ENCODE measurements at regions of chr5 and their contacts with region 1.

Region 1: DNA sequence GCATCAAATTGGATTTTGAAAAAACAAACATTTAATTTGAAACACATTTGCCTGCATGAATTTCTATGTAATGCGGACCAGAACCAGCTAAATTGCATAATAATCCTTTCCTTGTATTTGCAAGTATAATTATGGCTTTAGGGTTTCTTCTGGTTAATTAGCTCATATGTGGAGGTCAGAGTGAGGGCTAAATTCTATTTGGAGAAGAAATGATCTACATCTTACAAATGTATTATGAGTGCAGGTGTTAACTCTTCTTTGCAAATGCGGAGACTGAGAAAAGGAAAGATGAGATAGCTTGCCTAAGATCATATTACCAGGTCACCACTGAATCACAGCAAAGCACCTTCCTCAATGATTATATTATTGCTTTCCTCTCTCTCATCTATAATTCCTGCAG is 194.7 kb downstream of the CDH9 start:
- DNase-seq: no peak
- H3K4me3 ChIP-seq: no peak overlapping the region
- H3K27ac ChIP-seq: no peak overlapping the region
- H3K4me1 ChIP-seq: no peaks in the 10 kb centered on the region
- H3K27me3 ChIP-seq: no peaks in the 10 kb centered on the region
- CTCF ChIP-seq: no peak
- EP300 ChIP-seq: no peak
- POLR2A ChIP-seq: no peak

Region 2: GRCh38 chr5:26986985-26987384 is 143.3 kb after region 1 on chr5:
- in situ Hi-C with region 1: no loop called
- intact Hi-C with region 1: no loop called
- DNase-seq: no peak
- H3K4me3 ChIP-seq: no peak overlapping the region
- H3K27ac ChIP-seq: no peak overlapping the region
- H3K4me1 ChIP-seq: no peaks in the 10 kb centered on the region
- H3K27me3 ChIP-seq: no peaks in the 10 kb centered on the region
- CTCF ChIP-seq: no peak
- EP300 ChIP-seq: no peak
- POLR2A ChIP-seq: no peak

Region 3: GRCh38 chr5:28557114-28557513 is 1713.4 kb after region 1 on chr5:
- in situ Hi-C with region 1: no loop called
- intact Hi-C with region 1: no loop called
- DNase-seq: no peak
- H3K4me3 ChIP-seq: no peak overlapping the region
- H3K27ac ChIP-seq: no peak overlapping the region
- H3K4me1 ChIP-seq: no peaks in the 10 kb centered on the region
- H3K27me3 ChIP-seq: no peaks in the 10 kb centered on the region
- CTCF ChIP-seq: no peak
- EP300 ChIP-seq: no peak
- POLR2A ChIP-seq: no peak

Region 4: GRCh38 chr5:28779161-28779754 is 1935.6 kb after region 1 on chr5:
- in situ Hi-C with region 1: no loop called
- intact Hi-C with region 1: loop called (anchors 5 kb)
- DNase-seq: no peak
- H3K4me3 ChIP-seq: no peak overlapping the region
- H3K27ac ChIP-seq: no peak overlapping the region
- H3K4me1 ChIP-seq: no peaks in the 10 kb centered on the region
- H3K27me3 ChIP-seq: no peaks in the 10 kb centered on the region
- CTCF ChIP-seq: no peak
- EP300 ChIP-seq: no peak
- POLR2A ChIP-seq: no peak